Activated CD4-positive, alpha-beta T cell treated with anti-CD3 and anti-CD28 coated beads for 36 hours (primary cell): ENCODE measurements at regions of chrX and their contacts with region 1.

Region 1: DNA sequence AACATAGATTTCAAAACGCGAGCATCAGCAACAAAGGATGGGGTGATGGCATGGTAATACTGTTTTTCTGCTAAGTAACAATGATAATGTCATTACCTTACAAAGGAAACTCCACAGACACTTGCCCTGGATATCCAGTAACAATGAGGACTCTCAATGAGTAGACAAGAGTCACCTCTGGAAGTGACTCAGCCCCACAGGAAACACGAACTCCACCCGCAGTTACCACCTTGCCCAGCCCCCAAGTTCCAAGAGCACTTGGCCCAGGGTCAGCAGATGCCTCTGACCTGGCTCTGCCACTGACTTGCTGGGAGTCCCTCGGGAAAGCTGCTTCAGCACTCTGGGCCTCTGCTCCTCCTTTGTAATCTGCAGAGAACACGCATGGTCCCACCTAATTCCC is 110.3 kb upstream of the MAP3K15 start:
- DNase-seq: peak; percentile 59
- ATAC-seq: peak; percentile 86
- H3K4me3 Mint-ChIP-seq: no peak overlapping the region
- H3K27ac Mint-ChIP-seq: peak overlapping the region; percentile 88
- H3K4me1 Mint-ChIP-seq: peaks cover 71% of the 10 kb centered on the region
- H3K27me3 Mint-ChIP-seq: no peaks in the 10 kb centered on the region

Region 2: DNA sequence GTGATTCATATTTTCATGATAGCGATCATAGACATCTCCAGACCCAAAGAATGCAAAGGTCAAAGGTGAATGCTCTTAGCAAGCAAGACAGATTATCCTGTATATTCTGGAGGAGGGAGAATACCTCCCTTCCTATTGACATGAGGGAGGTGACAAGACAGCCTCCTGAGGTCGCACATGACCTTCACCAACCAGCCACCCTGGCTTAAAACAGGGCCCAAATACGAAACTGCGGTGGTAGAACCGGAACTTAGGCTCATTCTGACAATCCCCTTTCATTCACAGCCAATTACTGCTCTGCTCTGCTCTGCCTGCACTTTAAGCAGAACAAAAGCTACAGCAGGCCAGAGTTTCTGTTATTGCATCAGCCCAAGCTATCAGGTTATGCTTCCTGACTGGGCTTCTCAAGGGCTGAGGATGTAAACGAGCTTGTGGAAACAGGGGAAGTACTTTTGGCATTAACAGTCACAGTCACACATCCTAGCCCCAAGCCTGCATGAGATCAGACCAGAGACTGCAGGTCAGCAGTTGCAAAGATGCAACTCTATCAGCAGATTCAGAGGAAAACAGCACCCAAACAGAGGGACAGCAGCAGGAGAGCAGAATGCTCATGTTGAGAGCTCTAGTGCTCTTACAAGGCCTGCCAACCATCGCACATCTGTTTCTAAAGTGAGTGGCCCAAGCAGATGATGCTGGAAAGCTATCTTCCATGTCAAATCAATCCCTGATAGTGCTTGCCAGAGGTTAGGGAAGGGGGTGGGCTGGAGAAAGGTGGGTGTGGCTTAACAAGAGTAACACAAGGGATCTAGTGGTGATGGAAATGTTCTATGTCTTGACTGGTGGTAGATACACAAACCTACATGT is 59.0 kb before region 1 on chrX:
- CTCF ChIA-PET with region 1: no interaction called
- POLR2A ChIA-PET with region 1: no interaction called
- intact Hi-C with region 1: loop called in 1 of 2 experiments (anchors 5 kb)
- DNase-seq: peak; percentile 55
- ATAC-seq: peak; percentile 84
- H3K4me3 Mint-ChIP-seq: peak overlapping the region; percentile 51
- H3K27ac Mint-ChIP-seq: peak overlapping the region; percentile 96
- H3K4me1 Mint-ChIP-seq: peaks cover 70% of the 10 kb centered on the region
- H3K27me3 Mint-ChIP-seq: no peaks in the 10 kb centered on the region

Region 3: GRCh38 chrX:19642241-19643109 is 16.9 kb after region 1 on chrX:
- CTCF ChIA-PET with region 1: interaction called, 3 read pairs
- POLR2A ChIA-PET with region 1: no interaction called
- intact Hi-C with region 1: loop called in 1 of 2 experiments (anchors 1 kb)
- DNase-seq: no peak
- ATAC-seq: peak; percentile 79
- H3K4me3 Mint-ChIP-seq: no peak overlapping the region
- H3K27ac Mint-ChIP-seq: peak overlapping the region; percentile 24
- H3K4me1 Mint-ChIP-seq: peaks cover 23% of the 10 kb centered on the region
- H3K27me3 Mint-ChIP-seq: no peaks in the 10 kb centered on the region

Region 4: DNA sequence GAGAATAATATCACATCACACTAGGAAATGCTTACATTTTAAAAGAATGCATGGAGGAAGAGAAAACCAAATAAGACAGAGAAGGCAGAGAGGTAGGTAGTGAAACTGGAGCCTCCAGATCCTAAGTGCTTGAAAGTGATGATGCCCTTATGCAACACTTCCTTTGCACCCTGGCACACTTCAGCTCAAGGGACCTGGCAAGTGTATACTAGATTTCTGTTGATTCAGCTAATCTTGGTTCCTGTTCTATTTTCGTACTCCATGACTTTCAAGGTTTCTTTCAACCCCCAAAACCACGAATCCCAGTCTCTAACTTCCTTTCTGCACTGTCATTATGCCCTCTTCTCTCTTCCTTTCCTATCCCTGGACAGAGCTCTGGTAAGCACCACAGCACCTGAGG is 298.7 kb after region 1 on chrX:
- CTCF ChIA-PET with region 1: no interaction called
- POLR2A ChIA-PET with region 1: no interaction called
- intact Hi-C with region 1: no loop called
- DNase-seq: no peak
- ATAC-seq: no peak
- H3K4me3 Mint-ChIP-seq: no peak overlapping the region
- H3K27ac Mint-ChIP-seq: no peak overlapping the region
- H3K4me1 Mint-ChIP-seq: no peaks in the 10 kb centered on the region
- H3K27me3 Mint-ChIP-seq: no peaks in the 10 kb centered on the region